CD8-positive, alpha-beta T cell (primary cell): ENCODE measurements at regions of chr6 and their contacts with region 1.

Region 1: GRCh38 chr6:7238900-7239589 is 74.0 kb downstream of the SSR1 start:
- DNase-seq: peak; percentile 17 to 80 (median 73)
- ATAC-seq: peak; percentile 69
- H3K4me3 ChIP-seq: no peak overlapping the region
- H3K4me3 Mint-ChIP-seq: no peak overlapping the region
- H3K27ac ChIP-seq: no peak overlapping the region
- H3K27ac Mint-ChIP-seq: peak overlapping the region; percentile 55
- H3K4me1 ChIP-seq: no peaks in the 10 kb centered on the region
- H3K4me1 Mint-ChIP-seq: peaks cover 15% of the 10 kb centered on the region
- H3K27me3 ChIP-seq: no peaks in the 10 kb centered on the region
- H3K27me3 Mint-ChIP-seq: no peaks in the 10 kb centered on the region
- CTCF ChIP-seq: peak; percentile 47

Region 2: GRCh38 chr6:6676910-6677441 is 562.1 kb before region 1 on chr6:
- CTCF ChIA-PET with region 1: interaction called, 51 read pairs
- POLR2A ChIA-PET with region 1: no interaction called
- intact Hi-C with region 1: loop called (anchors 1 kb)
- DNase-seq: peak; percentile 58 to 90 (median 75)
- ATAC-seq: peak; percentile 98
- H3K4me3 ChIP-seq: no peak overlapping the region
- H3K4me3 Mint-ChIP-seq: no peak overlapping the region
- H3K27ac ChIP-seq: no peak overlapping the region
- H3K27ac Mint-ChIP-seq: no peak overlapping the region
- H3K4me1 ChIP-seq: peaks cover 7% of the 10 kb centered on the region
- H3K4me1 Mint-ChIP-seq: peaks cover 9% of the 10 kb centered on the region
- H3K27me3 ChIP-seq: no peaks in the 10 kb centered on the region
- H3K27me3 Mint-ChIP-seq: peaks cover 2% of the 10 kb centered on the region
- CTCF ChIP-seq: peak; percentile 97

Region 3: DNA sequence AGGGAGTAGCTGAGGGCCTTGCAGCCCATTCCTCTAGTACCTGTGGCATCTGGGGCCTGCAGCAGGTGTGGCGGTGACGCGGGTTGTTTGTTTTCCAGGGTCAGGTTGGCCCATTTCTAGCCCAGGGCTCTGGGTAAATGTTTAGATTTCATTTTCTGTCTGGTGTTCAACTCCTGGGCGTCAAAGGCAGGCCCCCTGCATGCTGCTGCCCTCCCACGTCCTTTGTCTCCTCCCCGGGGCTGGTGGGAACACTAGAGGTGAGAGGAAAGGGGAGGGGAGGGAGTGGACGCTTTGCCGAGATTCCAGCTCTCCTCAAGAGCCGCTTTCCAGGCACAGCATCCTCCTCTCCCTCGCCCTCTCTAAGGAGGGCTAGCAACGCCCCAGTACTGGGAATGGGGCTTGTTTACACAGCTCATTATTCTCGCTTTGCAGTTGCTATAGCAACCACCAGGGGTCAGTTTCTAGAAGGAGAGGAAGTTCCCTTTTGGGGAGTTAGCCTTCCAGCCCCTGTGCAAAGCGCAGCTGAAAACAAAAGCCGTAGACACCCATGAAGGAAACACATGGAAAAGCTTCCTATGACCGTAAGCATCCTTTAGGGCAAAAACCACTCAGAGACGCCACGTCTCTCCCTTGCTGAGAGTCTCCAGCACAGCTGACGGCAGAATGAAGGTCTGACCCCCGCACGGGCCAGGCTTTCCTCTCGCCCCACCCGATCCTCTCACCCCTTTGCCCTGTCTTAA is 480.0 kb before region 1 on chr6:
- CTCF ChIA-PET with region 1: interaction called, 4 read pairs
- POLR2A ChIA-PET with region 1: no interaction called
- intact Hi-C with region 1: loop called (anchors 1 kb)
- DNase-seq: peak in 5 of 9 experiments; percentile 3 to 46 (median 14)
- ATAC-seq: no peak
- H3K4me3 ChIP-seq: no peak overlapping the region
- H3K4me3 Mint-ChIP-seq: no peak overlapping the region
- H3K27ac ChIP-seq: no peak overlapping the region
- H3K27ac Mint-ChIP-seq: no peak overlapping the region
- H3K4me1 ChIP-seq: no peaks in the 10 kb centered on the region
- H3K4me1 Mint-ChIP-seq: no peaks in the 10 kb centered on the region
- H3K27me3 ChIP-seq: no peaks in the 10 kb centered on the region
- H3K27me3 Mint-ChIP-seq: peaks cover 4% of the 10 kb centered on the region
- CTCF ChIP-seq: peak; percentile 50

Region 4: DNA sequence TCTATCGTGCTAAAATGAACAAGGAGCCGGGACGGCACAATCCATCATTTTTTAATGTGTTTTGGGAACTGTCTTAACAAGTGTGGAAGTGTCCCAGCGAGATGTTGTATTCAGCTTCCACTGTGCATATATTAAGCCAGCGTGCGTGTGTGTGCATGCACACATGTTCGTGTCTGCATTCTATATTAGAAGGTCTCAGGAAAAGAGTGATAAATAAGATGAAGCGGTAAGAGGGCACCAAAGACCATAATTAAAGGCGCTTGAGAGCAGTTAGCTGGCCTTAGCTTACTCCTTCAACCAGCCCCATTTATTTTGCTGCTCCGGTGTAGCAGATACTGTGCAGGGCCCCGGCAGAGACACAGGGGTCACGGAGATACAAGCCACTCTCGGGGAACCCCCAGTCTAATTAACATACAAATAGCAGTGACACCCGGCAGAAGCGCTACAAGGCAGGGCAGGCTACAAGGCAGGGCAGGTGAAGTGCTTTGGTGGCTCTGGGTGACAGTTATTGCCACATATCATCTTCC is 337.8 kb before region 1 on chr6:
- CTCF ChIA-PET with region 1: interaction called, 3 read pairs
- POLR2A ChIA-PET with region 1: no interaction called
- intact Hi-C with region 1: loop called in 1 of 2 experiments (anchors 5 kb)
- DNase-seq: no peak
- ATAC-seq: no peak
- H3K4me3 ChIP-seq: no peak overlapping the region
- H3K4me3 Mint-ChIP-seq: no peak overlapping the region
- H3K27ac ChIP-seq: no peak overlapping the region
- H3K27ac Mint-ChIP-seq: no peak overlapping the region
- H3K4me1 ChIP-seq: no peaks in the 10 kb centered on the region
- H3K4me1 Mint-ChIP-seq: no peaks in the 10 kb centered on the region
- H3K27me3 ChIP-seq: no peaks in the 10 kb centered on the region
- H3K27me3 Mint-ChIP-seq: no peaks in the 10 kb centered on the region
- CTCF ChIP-seq: no peak

Region 5: DNA sequence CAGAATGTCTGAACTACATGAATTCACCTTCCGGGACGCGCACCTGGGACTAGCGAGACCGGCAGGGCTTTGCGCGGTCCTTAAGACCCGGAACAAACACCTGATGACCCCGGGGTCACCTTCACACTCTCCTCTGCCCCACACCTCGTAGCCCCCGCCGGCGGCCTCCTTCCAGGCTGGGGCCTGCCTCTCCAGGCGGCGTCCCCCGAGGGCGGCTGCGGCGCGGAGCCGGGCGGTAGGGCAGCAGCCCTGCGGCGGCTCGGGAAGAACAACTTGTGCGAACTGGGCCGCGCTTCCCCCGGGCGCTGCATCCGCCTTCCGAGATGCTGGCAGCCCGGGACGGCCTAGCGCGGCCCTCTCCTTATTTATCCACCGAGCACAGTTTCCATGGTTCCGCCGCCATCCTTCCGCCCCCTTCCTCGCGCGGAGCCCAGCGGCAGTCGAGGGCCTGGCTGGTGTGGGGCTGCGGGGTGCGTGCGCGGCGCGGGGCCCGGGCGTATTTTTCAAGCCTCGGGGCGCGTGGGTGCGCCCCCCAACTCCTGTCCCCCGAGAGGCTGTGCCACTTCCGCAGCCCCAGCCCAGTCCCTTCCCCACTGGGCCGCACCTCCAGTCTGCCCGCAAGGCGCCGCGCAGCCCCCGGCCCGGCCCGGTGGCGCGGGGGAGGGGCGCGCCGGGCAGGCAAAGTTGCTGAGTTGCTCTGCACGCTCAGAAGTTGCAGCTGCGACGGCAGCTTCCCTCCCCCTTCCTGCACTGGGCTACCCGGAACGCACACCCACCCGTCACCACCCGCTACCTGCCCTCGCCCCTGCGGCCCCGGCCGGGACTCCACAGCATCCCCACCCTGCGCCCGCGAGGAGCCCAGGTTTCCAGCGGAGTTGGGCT is 187.6 kb before region 1 on chr6:
- CTCF ChIA-PET with region 1: no interaction called
- POLR2A ChIA-PET with region 1: no interaction called
- intact Hi-C with region 1: loop called in 1 of 2 experiments (anchors 5 kb)
- DNase-seq: peak; percentile 13 to 77 (median 59)
- ATAC-seq: peak; percentile 79
- H3K4me3 ChIP-seq: peak overlapping the region; percentile 59 to 79
- H3K4me3 Mint-ChIP-seq: peak overlapping the region; percentile 81
- H3K27ac ChIP-seq: peak overlapping the region in 1 of 2 experiments; percentile 50
- H3K27ac Mint-ChIP-seq: peak overlapping the region; percentile 82
- H3K4me1 ChIP-seq: peaks cover 5% of the 10 kb centered on the region
- H3K4me1 Mint-ChIP-seq: peaks cover 15% of the 10 kb centered on the region
- H3K27me3 ChIP-seq: no peaks in the 10 kb centered on the region
- H3K27me3 Mint-ChIP-seq: no peaks in the 10 kb centered on the region
- CTCF ChIP-seq: no peak

Region 6: GRCh38 chr6:7261032-7261841 is 22.2 kb after region 1 on chr6:
- CTCF ChIA-PET with region 1: interaction called, 10 read pairs
- POLR2A ChIA-PET with region 1: no interaction called
- intact Hi-C with region 1: no loop called
- DNase-seq: peak in 4 of 9 experiments; percentile 8 to 51 (median 24)
- ATAC-seq: peak; percentile 62
- H3K4me3 ChIP-seq: peak overlapping the region; percentile 50 to 60
- H3K4me3 Mint-ChIP-seq: peak overlapping the region; percentile 87
- H3K27ac ChIP-seq: no peak overlapping the region
- H3K27ac Mint-ChIP-seq: no peak overlapping the region
- H3K4me1 ChIP-seq: peaks cover 14% of the 10 kb centered on the region
- H3K4me1 Mint-ChIP-seq: peaks cover 12% of the 10 kb centered on the region
- H3K27me3 ChIP-seq: no peaks in the 10 kb centered on the region
- H3K27me3 Mint-ChIP-seq: peaks cover 28% of the 10 kb centered on the region
- CTCF ChIP-seq: no peak